Activated CD8-positive, alpha-beta T cell treated with anti-CD3 and anti-CD28 coated beads, Interleukin-2, amount 10 ng/mL, durations not matched to agents 7 days and 5 days (primary cell): ENCODE measurements at regions of chr2 and their contacts with region 1.

Region 1: DNA sequence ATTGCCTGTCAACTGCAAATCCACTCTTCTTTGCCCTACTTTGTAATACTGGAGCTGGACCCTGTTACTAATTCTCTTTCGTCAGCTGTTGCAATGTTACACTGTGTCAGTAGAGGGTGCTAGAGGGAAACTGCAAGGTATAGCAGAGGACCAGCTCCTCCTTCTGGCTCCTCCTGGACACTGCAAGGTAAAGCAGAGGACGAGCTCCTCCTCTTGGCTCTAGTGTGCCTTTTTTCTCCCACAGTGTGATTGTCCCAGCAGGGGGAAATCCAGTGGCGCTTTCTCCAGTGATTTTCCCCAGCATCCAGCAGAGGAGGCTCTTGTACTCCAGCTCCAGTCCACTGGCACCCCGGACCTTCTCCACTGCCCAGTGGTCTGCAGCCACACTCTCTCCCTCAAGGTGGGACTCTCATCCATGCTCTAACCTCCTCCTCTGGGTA is 95.6 kb downstream of the CAPN13 start:
- DNase-seq: peak; percentile 94
- ATAC-seq: peak; percentile 80
- H3K4me3 Mint-ChIP-seq: no peak overlapping the region
- H3K27ac Mint-ChIP-seq: no peak overlapping the region
- H3K4me1 Mint-ChIP-seq: peaks cover 8% of the 10 kb centered on the region
- H3K27me3 Mint-ChIP-seq: no peaks in the 10 kb centered on the region

Region 2: GRCh38 chr2:30089171-30089570 is 622.5 kb before region 1 on chr2:
- CTCF ChIA-PET with region 1: interaction called, 11 read pairs
- POLR2A ChIA-PET with region 1: no interaction called
- DNase-seq: no peak
- ATAC-seq: no peak
- H3K4me3 Mint-ChIP-seq: no peak overlapping the region
- H3K27ac Mint-ChIP-seq: no peak overlapping the region
- H3K4me1 Mint-ChIP-seq: no peaks in the 10 kb centered on the region
- H3K27me3 Mint-ChIP-seq: peaks cover 42% of the 10 kb centered on the region

Region 3: GRCh38 chr2:30165050-30165520 is 546.6 kb before region 1 on chr2:
- CTCF ChIA-PET with region 1: interaction called, 592 read pairs
- POLR2A ChIA-PET with region 1: interaction called, 8 read pairs
- DNase-seq: peak; percentile 84
- ATAC-seq: peak; percentile 79
- H3K4me3 Mint-ChIP-seq: no peak overlapping the region
- H3K27ac Mint-ChIP-seq: no peak overlapping the region
- H3K4me1 Mint-ChIP-seq: peaks cover 17% of the 10 kb centered on the region
- H3K27me3 Mint-ChIP-seq: peaks cover 3% of the 10 kb centered on the region

Region 4: DNA sequence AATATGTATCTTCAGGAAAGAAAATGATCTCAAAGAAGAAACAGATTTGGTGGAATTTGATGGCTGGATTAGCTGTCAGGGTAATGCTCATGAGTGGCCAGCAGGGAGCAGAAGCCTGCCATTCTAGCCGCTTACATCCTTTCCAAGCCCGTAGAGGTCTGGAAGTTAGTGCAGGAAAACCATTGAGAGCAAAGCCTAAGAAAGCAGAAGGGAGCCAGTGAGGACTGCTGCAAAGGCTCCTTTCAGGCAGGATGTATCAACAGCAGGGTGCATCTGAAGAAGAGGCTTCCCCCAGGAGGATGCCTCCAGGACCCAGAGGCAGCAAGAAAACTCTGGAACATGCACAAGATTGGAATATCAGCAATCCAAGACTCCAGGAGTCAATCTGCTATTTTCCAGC is 503.2 kb before region 1 on chr2:
- CTCF ChIA-PET with region 1: interaction called, 120 read pairs
- POLR2A ChIA-PET with region 1: no interaction called
- DNase-seq: peak; percentile 53
- ATAC-seq: peak; percentile 75
- H3K4me3 Mint-ChIP-seq: no peak overlapping the region
- H3K27ac Mint-ChIP-seq: peak overlapping the region; percentile 49
- H3K4me1 Mint-ChIP-seq: peaks cover 18% of the 10 kb centered on the region
- H3K27me3 Mint-ChIP-seq: peaks cover 8% of the 10 kb centered on the region

Region 5: GRCh38 chr2:30336978-30337841 is 374.5 kb before region 1 on chr2:
- CTCF ChIA-PET with region 1: interaction called, 22 read pairs
- POLR2A ChIA-PET with region 1: no interaction called
- DNase-seq: peak; percentile 76
- ATAC-seq: peak; percentile 94
- H3K4me3 Mint-ChIP-seq: peak overlapping the region; percentile 71
- H3K27ac Mint-ChIP-seq: peak overlapping the region; percentile 97
- H3K4me1 Mint-ChIP-seq: peaks cover 69% of the 10 kb centered on the region
- H3K27me3 Mint-ChIP-seq: no peaks in the 10 kb centered on the region

Region 6: DNA sequence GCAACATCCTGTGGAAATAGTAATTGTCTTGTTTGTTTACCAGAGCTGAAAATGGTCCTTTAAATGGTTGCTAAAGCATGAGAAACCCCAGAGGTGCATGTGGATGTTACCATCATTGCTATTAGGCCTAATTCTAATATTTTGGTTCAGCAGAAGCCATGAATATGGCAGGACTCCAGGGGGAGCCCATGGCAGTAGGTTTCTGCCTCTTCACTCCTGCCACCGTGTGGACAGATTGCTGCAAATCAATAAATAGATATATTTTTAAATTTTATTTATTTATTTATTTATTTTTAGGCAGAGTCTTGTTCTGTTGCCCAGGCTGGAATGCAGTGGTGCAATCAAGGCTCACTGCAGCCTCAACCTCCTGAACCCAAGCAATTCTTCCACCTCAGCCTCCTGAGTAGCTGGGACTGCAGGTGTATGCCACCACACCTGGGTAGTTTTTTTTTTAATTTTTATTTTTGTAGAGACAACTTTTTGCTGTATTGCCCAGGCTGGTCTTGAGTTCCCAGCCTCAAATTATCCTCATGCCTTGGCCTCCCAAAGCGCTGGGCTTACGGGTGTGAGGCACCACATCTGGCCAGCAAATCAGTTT is 150.5 kb after region 1 on chr2:
- CTCF ChIA-PET with region 1: interaction called, 69 read pairs
- POLR2A ChIA-PET with region 1: no interaction called
- DNase-seq: peak; percentile 58
- ATAC-seq: no peak
- H3K4me3 Mint-ChIP-seq: no peak overlapping the region
- H3K27ac Mint-ChIP-seq: no peak overlapping the region
- H3K4me1 Mint-ChIP-seq: peaks cover 16% of the 10 kb centered on the region
- H3K27me3 Mint-ChIP-seq: peaks cover 11% of the 10 kb centered on the region

Region 7: DNA sequence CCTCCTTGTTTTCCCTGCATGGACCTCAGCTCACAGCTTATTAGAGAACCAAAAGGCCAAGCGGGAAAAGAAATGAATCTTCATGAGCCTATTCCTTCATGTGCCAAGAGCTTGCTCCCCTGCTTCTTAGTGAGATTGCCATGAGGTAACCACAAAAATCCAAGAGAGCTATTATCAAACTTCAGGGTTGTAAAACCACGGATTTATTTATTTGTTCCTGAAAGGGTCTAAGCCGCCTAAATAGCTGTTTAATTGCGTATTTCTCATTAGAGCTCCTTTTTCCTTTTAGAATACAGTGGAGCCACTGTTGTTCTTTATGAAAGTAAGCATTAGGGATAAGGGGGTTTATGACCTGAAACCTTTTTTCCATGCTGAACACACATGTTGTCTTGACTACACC is 811.1 kb after region 1 on chr2:
- CTCF ChIA-PET with region 1: interaction called, 10 read pairs
- POLR2A ChIA-PET with region 1: no interaction called
- DNase-seq: no peak
- ATAC-seq: no peak
- H3K4me3 Mint-ChIP-seq: no peak overlapping the region
- H3K27ac Mint-ChIP-seq: no peak overlapping the region
- H3K4me1 Mint-ChIP-seq: no peaks in the 10 kb centered on the region
- H3K27me3 Mint-ChIP-seq: peaks cover 8% of the 10 kb centered on the region